T-cell (primary cell): ENCODE measurements at regions of chr19 and their contacts with region 1.

Region 1: DNA sequence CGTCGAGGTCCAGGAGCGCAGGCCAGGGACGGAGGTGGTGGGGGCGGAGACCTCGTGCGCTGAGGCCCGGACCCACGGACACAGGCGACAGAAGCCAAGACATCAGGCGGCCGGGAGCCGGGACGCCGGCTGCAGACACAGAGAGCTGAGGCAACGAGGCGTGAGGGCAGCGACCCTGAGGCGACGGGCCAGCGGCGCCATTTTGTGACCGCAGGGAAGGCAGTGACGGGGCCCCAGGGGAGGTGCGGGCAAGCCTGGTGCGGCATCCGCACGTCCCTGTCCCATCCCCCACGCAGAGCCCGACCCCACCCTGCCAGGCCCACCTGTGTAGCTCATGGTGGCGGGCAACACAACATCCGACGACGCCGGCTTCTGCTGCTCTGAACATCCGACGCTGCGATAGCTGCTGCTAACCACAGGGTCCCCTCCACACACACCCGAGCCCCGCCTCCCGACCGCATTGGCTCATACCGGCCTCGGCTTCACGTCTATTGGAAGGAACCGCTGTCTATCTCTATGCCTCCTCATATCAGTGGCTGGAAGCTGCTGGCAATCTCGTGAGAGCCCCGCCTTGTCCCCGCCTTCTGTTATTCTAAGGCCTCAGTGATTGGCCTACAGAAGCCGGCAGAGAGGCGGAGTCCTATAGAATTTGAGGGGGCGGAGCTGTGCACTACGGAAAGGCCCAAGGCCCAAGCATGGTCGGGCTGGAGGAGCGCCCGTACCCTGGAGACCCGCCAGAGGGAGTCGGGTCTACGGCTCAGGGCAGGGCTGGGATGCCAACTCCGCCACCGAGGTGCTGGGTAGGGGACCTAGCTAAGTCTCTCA is at the start of gene AKAP8L:
- DNase-seq: peak; percentile 91 to 100 (median 99)
- ATAC-seq: peak; percentile 92 to 94 (median 94)
- H3K4me3 ChIP-seq: peak within 1 kb of the TSS; percentile 71 to 89
- H3K4me3 Mint-ChIP-seq: peak within 1 kb of the TSS; percentile 90 to 99 (median 97)
- H3K27ac ChIP-seq: peak within 1 kb of the TSS; percentile 55
- H3K27ac Mint-ChIP-seq: peak within 1 kb of the TSS; percentile 95 to 98
- H3K4me1 ChIP-seq: peaks cover 10 to 29% of the 10 kb centered on the region in 2 experiments
- H3K4me1 Mint-ChIP-seq: peaks cover 46 to 48% (median 46%) of the 10 kb centered on the region in 3 donors
- H3K27me3 ChIP-seq: no peaks in the 10 kb centered on the region
- H3K27me3 Mint-ChIP-seq: no peaks in the 10 kb centered on the region
- total RNA-seq, gene AKAP8L: 134 to 198 (median 184) TPM

Region 2: GRCh38 chr19:15260939-15261338 is 157.9 kb before region 1 on chr19:
- CTCF ChIA-PET with region 1: no interaction called
- POLR2A ChIA-PET with region 1: no interaction called
- DNase-seq: no peak
- ATAC-seq: no peak
- H3K4me3 ChIP-seq: no peak overlapping the region
- H3K4me3 Mint-ChIP-seq: no peak overlapping the region
- H3K27ac ChIP-seq: no peak overlapping the region
- H3K27ac Mint-ChIP-seq: no peak overlapping the region
- H3K4me1 ChIP-seq: no peaks in the 10 kb centered on the region
- H3K4me1 Mint-ChIP-seq: peaks cover 0 to 12% (median 0%) of the 10 kb centered on the region in 3 donors
- H3K27me3 ChIP-seq: no peaks in the 10 kb centered on the region
- H3K27me3 Mint-ChIP-seq: no peaks in the 10 kb centered on the region

Region 3: GRCh38 chr19:15379083-15379995 is 39.5 kb before region 1 on chr19 and contains the start of gene AKAP8:
- CTCF ChIA-PET with region 1: interaction called in 1 of 2 experiments, 20 read pairs
- POLR2A ChIA-PET with region 1: interaction called, 3 to 4 read pairs
- DNase-seq: peak; percentile 94 to 100 (median 98)
- ATAC-seq: peak; percentile 91 to 93 (median 91)
- H3K4me3 ChIP-seq: peak within 1 kb of the TSS; percentile 90 to 99
- H3K4me3 Mint-ChIP-seq: peak within 1 kb of the TSS; percentile 91 to 98 (median 97)
- H3K27ac ChIP-seq: peak within 1 kb of the TSS; percentile 96
- H3K27ac Mint-ChIP-seq: peak within 1 kb of the TSS; percentile 98 to 99
- H3K4me1 ChIP-seq: peaks cover 7 to 41% of the 10 kb centered on the region in 2 experiments
- H3K4me1 Mint-ChIP-seq: peaks cover 31 to 48% (median 46%) of the 10 kb centered on the region in 3 donors
- H3K27me3 ChIP-seq: no peaks in the 10 kb centered on the region
- H3K27me3 Mint-ChIP-seq: no peaks in the 10 kb centered on the region
- total RNA-seq, gene AKAP8: 75.8 to 90.3 (median 86.7) TPM

Region 4: DNA sequence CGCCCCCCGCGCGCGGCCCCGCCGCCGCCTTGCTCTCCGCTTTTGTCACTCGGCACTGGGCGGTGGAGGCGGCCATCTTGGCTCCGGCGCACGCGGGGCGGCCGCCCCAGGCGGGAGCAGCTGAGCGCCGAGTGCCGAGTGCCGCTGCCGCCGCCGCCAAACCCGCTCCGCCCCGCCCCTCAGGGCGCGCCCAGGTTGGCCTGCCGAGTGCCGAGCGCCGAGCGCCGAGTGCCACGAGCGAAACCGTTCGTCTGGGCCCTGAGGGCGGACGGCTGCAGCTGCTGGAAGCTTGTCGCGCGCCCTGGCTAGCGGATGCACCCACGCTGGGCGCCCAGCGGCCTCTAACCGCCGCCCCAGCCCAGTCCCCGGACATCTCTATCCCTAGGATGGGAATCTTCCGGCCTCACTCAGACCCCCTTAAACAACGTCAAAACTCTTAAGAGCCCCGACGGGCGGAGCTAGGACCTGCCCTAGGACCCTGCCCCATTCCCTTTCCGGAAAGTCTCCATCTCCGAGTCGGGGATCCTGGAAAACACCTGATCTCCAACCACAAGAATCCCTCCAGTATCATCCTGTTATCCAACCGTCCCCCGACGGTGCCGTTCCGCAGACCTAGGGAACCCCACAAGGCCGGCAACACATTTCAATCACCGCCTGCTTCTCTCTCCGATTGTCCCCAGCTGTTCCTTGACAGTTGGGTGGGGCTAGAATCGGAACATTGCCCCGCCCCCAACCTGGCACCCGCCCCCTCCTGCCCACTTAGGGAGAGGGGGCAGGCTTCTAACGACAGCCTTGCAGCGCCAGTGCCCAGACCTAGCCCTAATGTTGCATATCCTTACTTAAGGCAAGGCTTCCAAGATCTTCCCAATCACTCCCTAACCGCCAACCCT is 14.1 kb after region 1 on chr19:
- CTCF ChIA-PET with region 1: interaction called, 4 to 15 read pairs
- POLR2A ChIA-PET with region 1: interaction called in 1 of 2 experiments, 4 read pairs
- DNase-seq: peak; percentile 86 to 96 (median 91)
- ATAC-seq: peak; percentile 90 to 94 (median 93)
- H3K4me3 ChIP-seq: peak overlapping the region; percentile 88 to 94
- H3K4me3 Mint-ChIP-seq: peak overlapping the region; percentile 91 to 95 (median 93)
- H3K27ac ChIP-seq: peak overlapping the region; percentile 71
- H3K27ac Mint-ChIP-seq: peak overlapping the region; percentile 90 to 92
- H3K4me1 ChIP-seq: peaks cover 6 to 41% of the 10 kb centered on the region in 2 experiments
- H3K4me1 Mint-ChIP-seq: peaks cover 27 to 32% (median 29%) of the 10 kb centered on the region in 3 donors
- H3K27me3 ChIP-seq: no peaks in the 10 kb centered on the region
- H3K27me3 Mint-ChIP-seq: no peaks in the 10 kb centered on the region

Region 5: DNA sequence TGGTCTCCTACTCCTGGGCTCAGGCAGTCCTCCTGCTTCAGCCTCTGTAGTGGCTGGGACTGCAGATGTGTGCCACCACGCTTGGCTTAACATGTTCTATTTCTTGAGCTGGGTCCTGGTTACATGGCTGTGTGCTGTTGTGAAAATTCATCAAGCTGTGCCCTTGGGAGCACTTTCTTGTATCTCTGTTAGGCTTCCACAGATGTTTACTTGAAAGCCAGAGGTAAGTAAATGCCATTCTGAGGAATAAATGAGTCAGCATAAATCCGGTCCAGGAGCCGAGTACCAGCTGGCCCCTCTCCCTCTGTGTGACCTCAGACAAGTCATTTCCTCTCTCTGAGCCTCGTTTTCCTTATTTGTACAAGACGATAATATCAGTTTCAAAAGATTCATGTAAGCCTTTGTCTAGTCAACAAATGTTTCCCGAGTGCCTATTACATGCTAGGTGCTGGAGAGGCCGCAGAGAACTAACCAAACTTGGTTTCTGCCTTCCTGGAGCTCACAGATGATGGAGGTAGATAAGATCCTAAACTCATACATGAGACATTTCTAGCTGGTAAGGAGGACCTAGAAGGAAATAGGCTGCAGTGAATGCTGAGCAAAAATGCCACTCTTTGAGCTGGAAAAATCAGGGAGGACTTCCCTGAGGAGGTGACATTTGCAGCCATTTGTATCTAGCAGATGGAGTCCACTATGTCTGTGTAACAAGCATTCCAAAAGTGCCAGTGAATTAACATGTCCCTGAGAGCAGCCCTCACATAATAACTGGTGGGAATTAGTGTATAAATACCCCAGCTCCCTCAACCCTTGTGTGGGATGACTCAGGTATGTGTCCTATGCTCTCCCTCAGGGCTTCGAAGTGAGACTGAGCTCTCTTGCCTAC is 48.3 kb after region 1 on chr19:
- CTCF ChIA-PET with region 1: interaction called in 1 of 2 experiments, 16 read pairs
- POLR2A ChIA-PET with region 1: interaction called in 1 of 2 experiments, 4 read pairs
- DNase-seq: peak in 15 of 35 experiments; percentile 10 to 69 (median 26)
- ATAC-seq: peak; percentile 24 to 47 (median 38)
- H3K4me3 ChIP-seq: no peak overlapping the region
- H3K4me3 Mint-ChIP-seq: peak overlapping the region; percentile 60 to 89 (median 69)
- H3K27ac ChIP-seq: peak overlapping the region; percentile 76
- H3K27ac Mint-ChIP-seq: peak overlapping the region; percentile 87 to 96
- H3K4me1 ChIP-seq: peaks cover 23 to 73% of the 10 kb centered on the region in 2 experiments
- H3K4me1 Mint-ChIP-seq: peaks cover 62 to 68% (median 64%) of the 10 kb centered on the region in 3 donors
- H3K27me3 ChIP-seq: no peaks in the 10 kb centered on the region
- H3K27me3 Mint-ChIP-seq: peaks cover 0 to 3% of the 10 kb centered on the region in 2 donors

Region 6: DNA sequence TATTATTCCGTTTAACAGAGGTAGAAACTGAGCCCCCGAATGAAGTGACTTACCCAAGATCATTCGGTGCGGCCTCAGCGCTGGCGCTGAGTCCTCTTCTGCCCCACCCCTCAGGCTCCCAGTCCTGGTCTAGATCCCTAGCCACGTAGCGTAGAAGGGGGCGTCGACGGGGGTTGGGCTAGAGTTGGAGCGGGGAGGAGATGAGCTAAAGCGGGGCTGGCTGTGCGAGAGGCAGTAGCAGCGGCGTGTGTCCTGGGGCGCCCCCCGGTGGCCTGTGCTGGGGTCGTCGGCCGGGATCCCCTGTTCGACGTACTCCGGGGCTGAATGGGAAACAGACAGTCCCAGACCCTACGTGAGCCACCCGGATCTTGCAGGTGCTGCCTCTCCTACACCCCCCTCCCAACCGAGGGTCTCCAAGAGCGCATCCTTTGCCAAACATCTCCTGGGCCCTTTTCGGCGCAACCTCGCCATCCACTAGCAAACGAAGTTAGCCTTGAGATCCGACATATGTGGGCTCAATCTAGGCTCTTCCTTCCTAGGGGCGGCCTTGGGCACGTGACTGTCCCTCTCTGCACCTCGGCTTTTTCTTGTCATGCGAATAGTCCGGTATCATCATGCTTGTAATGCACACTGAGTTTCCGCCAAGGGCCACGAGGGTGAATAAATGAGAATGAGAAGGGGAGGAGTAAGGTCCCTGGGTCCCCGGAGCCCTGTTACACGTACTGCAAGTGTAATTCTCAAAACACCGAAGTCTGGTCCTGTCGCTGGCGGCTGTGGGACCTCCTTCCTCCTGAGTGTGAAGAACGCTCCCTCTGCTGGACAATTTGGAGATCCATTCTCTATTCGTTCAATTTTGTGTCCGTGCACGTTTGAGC is 137.2 kb after region 1 on chr19:
- CTCF ChIA-PET with region 1: interaction called, 6 to 113 read pairs
- POLR2A ChIA-PET with region 1: interaction called, 6 to 13 read pairs
- DNase-seq: peak; percentile 87 to 99 (median 94)
- ATAC-seq: peak; percentile 81 to 89 (median 86)
- H3K4me3 ChIP-seq: peak overlapping the region; percentile 52 to 82
- H3K4me3 Mint-ChIP-seq: peak overlapping the region; percentile 66 to 81 (median 75)
- H3K27ac ChIP-seq: peak overlapping the region; percentile 65
- H3K27ac Mint-ChIP-seq: peak overlapping the region; percentile 88 to 89
- H3K4me1 ChIP-seq: peaks cover 7 to 33% of the 10 kb centered on the region in 2 experiments
- H3K4me1 Mint-ChIP-seq: peaks cover 23 to 30% (median 28%) of the 10 kb centered on the region in 3 donors
- H3K27me3 ChIP-seq: peaks cover 0 to 14% of the 10 kb centered on the region in 2 experiments
- H3K27me3 Mint-ChIP-seq: no peaks in the 10 kb centered on the region

Region 7: GRCh38 chr19:15684831-15685230 is 266.0 kb after region 1 on chr19:
- CTCF ChIA-PET with region 1: no interaction called
- POLR2A ChIA-PET with region 1: no interaction called
- DNase-seq: peak in 2 of 35 experiments; percentile 7 to 12
- ATAC-seq: no peak
- H3K4me3 ChIP-seq: no peak overlapping the region
- H3K4me3 Mint-ChIP-seq: no peak overlapping the region
- H3K27ac ChIP-seq: no peak overlapping the region
- H3K27ac Mint-ChIP-seq: no peak overlapping the region
- H3K4me1 ChIP-seq: no peaks in the 10 kb centered on the region
- H3K4me1 Mint-ChIP-seq: no peaks in the 10 kb centered on the region
- H3K27me3 ChIP-seq: peaks cover 0 to 27% of the 10 kb centered on the region in 2 experiments
- H3K27me3 Mint-ChIP-seq: peaks cover 42 to 58% of the 10 kb centered on the region in 2 donors

Region 8: DNA sequence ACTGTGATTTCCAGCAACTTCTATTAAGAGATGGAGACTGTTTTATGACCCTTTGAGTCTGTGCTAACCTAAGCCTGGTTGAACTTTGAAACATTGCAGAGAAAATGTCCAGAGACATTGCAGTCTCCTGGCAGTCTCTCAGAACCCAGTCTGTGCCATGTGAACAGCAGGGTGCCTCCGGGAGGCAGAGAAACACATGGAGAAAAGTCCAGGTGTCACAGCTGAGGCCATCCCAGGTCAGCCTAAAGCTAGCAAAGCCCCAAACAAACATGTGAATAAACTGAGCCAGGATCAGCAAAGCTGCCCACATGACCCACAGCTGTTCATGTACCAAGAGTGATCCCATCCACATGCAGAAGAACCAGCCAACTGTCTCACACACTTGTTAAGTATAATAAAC is 507.7 kb after region 1 on chr19:
- CTCF ChIA-PET with region 1: no interaction called
- POLR2A ChIA-PET with region 1: no interaction called
- DNase-seq: no peak
- ATAC-seq: no peak
- H3K4me3 ChIP-seq: no peak overlapping the region
- H3K4me3 Mint-ChIP-seq: no peak overlapping the region
- H3K27ac ChIP-seq: no peak overlapping the region
- H3K27ac Mint-ChIP-seq: no peak overlapping the region
- H3K4me1 ChIP-seq: no peaks in the 10 kb centered on the region
- H3K4me1 Mint-ChIP-seq: no peaks in the 10 kb centered on the region
- H3K27me3 ChIP-seq: peaks cover 0 to 49% of the 10 kb centered on the region in 2 experiments
- H3K27me3 Mint-ChIP-seq: peaks cover 55 to 66% of the 10 kb centered on the region in 2 donors